PC-9 (cell line): ENCODE measurements at regions of chr5 and their contacts with region 1.

Region 1: GRCh38 chr5:137778772-137779564 is 24.8 kb upstream of the HNRNPA0 start:
- DNase-seq: no peak
- H3K4me3 ChIP-seq: no peak overlapping the region
- H3K27ac ChIP-seq: no peak overlapping the region
- H3K4me1 ChIP-seq: no peaks in the 10 kb centered on the region
- H3K27me3 ChIP-seq: no peaks in the 10 kb centered on the region
- CTCF ChIP-seq: peak; percentile 89

Region 2: DNA sequence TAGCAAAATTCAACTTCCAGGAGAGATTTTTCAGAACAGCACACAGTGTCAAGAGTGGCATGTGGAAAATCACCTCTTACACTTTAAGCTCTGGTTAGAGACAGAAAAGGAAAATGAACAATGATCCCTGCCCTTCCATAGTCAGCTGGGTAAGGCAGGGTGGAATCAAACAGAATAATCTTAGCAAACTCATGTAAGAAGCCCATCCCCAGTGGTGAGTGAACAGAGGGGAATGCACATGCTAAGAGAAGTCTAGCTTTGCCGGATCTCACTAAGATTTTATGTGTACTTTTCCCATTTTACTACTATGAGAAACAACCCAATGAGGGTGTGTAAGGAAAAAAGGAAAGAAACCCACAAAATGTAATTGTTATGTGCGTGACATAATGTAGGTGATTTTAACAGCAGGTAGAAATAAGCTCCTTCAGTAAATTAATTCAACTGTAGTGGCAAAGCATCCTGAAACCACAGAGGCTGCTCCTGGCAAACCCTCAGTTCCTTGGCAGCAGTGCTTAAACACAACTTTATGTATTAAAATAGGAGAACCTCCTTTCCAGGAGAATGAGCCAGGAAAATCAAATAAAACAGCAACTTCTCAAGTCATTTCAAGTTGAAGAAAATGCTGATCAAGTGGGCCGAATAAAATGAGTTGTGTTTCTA is 1047.6 kb before region 1 on chr5:
- CTCF ChIA-PET with region 1: no interaction called
- POLR2A ChIA-PET with region 1: no interaction called
- intact Hi-C with region 1: no loop called
- DNase-seq: no peak
- H3K4me3 ChIP-seq: peak overlapping the region; percentile 18; the same call in 1 of the 2 replicates
- H3K27ac ChIP-seq: peak overlapping the region; percentile 95
- H3K4me1 ChIP-seq: peaks cover 37% of the 10 kb centered on the region
- H3K27me3 ChIP-seq: no peaks in the 10 kb centered on the region
- CTCF ChIP-seq: no peak

Region 3: DNA sequence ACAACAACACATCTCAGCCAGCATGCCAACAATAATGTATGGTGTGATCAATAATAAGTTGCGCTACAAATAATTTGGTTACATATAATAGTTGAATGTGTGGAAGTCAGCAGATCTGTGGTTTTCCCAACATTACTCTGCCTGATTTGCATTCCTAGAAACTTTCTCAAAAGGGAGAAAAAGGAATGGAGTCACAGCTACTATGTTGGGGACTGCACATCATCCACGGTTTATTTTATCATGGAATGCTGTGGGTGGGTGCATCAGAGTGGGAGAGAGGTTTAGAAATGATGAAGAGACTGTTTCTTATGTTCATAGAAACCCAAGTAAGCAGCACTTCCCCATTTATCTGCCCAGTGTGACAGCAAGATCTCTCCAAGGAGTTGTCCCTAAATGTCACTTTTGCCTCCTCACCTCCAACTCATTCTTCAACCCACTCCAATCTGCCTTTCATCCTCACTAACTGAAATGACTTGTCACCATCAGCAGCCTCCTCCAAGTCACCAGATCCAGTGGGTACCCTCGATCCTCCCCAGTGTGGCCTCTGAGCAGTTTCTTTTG is 277.0 kb before region 1 on chr5:
- CTCF ChIA-PET with region 1: no interaction called
- POLR2A ChIA-PET with region 1: no interaction called
- intact Hi-C with region 1: no loop called
- DNase-seq: no peak
- H3K4me3 ChIP-seq: no peak overlapping the region
- H3K27ac ChIP-seq: no peak overlapping the region
- H3K4me1 ChIP-seq: no peaks in the 10 kb centered on the region
- H3K27me3 ChIP-seq: no peaks in the 10 kb centered on the region
- CTCF ChIP-seq: no peak

Region 4: GRCh38 chr5:137888857-137889759 is 110.1 kb after region 1 on chr5 and contains the start of gene PKD2L2:
- CTCF ChIA-PET with region 1: interaction called, 9 read pairs
- POLR2A ChIA-PET with region 1: no interaction called
- intact Hi-C with region 1: loop called (anchors 10 kb)
- DNase-seq: peak; percentile 75 to 87
- H3K4me3 ChIP-seq: peak within 1 kb of the TSS; percentile 67
- H3K27ac ChIP-seq: peak within 1 kb of the TSS; percentile 63
- H3K4me1 ChIP-seq: peaks cover 29% of the 10 kb centered on the region
- H3K27me3 ChIP-seq: no peaks in the 10 kb centered on the region
- CTCF ChIP-seq: no peak
- total RNA-seq, gene PKD2L2: 0.46 and 0.50 TPM in 2 replicates

Region 5: GRCh38 chr5:138035605-138036537 is 256.9 kb after region 1 on chr5:
- CTCF ChIA-PET with region 1: no interaction called
- POLR2A ChIA-PET with region 1: no interaction called
- intact Hi-C with region 1: loop called (anchors 1 kb)
- DNase-seq: peak; percentile 55 to 79
- H3K4me3 ChIP-seq: no peak overlapping the region
- H3K27ac ChIP-seq: no peak overlapping the region
- H3K4me1 ChIP-seq: peaks cover 20% of the 10 kb centered on the region
- H3K27me3 ChIP-seq: no peaks in the 10 kb centered on the region
- CTCF ChIP-seq: peak; percentile 87

Region 6: DNA sequence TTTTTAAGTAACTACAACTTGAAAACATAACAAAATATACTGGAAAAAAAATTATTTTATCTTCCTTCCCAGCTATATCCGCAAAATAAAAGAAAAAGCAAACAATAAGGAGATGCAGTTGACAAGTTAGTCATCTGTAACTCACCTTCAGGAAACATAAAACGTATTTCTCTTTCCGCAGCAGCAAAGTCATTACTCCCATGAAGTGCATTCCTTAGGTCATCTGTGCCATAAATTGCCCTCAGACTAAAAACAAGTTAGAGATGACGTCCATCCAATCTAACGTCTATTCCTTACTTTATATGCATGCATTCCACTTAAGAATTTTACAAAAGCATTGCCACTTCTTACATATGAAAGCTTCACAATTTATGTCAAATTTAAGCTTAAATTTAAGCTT is 349.4 kb after region 1 on chr5:
- CTCF ChIA-PET with region 1: interaction called, 3 read pairs
- POLR2A ChIA-PET with region 1: interaction called, 12 read pairs
- intact Hi-C with region 1: loop called (anchors 1 kb)
- DNase-seq: no peak
- H3K4me3 ChIP-seq: no peak overlapping the region
- H3K27ac ChIP-seq: no peak overlapping the region
- H3K4me1 ChIP-seq: no peaks in the 10 kb centered on the region; the same call in 1 of the 2 replicates
- H3K27me3 ChIP-seq: no peaks in the 10 kb centered on the region
- CTCF ChIP-seq: no peak